ENCODE measurements at regions of chr13 and their contacts with region 1.

Region 1: DNA sequence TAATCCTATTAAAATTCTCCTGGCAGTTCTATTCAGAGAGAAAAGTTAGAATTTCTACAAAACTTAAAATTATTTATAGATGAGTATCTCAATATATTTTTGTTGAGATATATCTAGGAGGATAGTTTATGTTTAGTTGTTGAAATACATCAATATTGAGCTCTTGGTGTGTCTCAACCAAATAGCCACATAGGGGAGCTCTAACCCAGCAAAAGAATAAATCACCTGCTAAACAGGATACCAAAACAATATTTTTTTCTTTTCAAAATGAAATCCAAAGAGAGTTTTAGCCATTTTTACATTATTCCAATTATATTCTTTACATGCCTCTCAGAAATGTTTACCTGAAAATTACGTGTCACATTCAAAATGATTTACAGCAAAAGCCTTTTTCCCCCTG is 954.7 kb downstream of the SLITRK6 start:
- DNase-seq: peak; percentile 4
- ATAC-seq: peak; percentile 49; the same call in 1 of the 2 replicates
- H3K4me3 ChIP-seq: no peak overlapping the region
- H3K27ac ChIP-seq: no peak overlapping the region
- H3K4me1 ChIP-seq: no peaks in the 10 kb centered on the region
- H3K27me3 ChIP-seq: no peaks in the 10 kb centered on the region
- CTCF ChIP-seq: peak; percentile 16 to 46 (median 24); a peak in 5 of 6 replicates
- POLR2A ChIP-seq: no peak
- RAD21 ChIP-seq: peak; percentile 46

Region 2: DNA sequence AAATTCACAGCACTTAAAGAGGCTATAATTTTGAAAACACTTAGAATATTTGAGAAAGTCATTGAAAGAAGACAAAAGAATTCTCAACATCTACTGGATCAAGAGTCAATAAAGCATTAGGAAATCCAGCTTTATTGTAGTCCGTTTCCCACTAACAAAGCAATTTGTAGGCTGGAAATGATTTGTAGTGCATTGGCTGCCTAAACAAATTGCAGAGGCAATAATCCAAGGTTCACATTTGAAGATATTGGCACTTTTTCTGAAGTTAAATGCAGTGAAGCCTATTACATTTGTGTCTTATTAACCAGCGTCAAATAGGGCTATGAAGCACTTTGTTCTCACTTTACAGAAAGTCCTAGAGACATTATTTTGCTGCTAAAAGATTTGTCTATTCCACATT is 114.1 kb before region 1 on chr13:
- CTCF ChIA-PET with region 1: no interaction called
- POLR2A ChIA-PET with region 1: no interaction called
- RAD21 ChIA-PET with region 1: no interaction called
- intact Hi-C with region 1: no loop called
- DNase-seq: no peak
- ATAC-seq: no peak
- H3K4me3 ChIP-seq: no peak overlapping the region
- H3K27ac ChIP-seq: no peak overlapping the region
- H3K4me1 ChIP-seq: no peaks in the 10 kb centered on the region
- H3K27me3 ChIP-seq: no peaks in the 10 kb centered on the region
- CTCF ChIP-seq: no peak
- POLR2A ChIP-seq: no peak
- RAD21 ChIP-seq: no peak

Region 3: DNA sequence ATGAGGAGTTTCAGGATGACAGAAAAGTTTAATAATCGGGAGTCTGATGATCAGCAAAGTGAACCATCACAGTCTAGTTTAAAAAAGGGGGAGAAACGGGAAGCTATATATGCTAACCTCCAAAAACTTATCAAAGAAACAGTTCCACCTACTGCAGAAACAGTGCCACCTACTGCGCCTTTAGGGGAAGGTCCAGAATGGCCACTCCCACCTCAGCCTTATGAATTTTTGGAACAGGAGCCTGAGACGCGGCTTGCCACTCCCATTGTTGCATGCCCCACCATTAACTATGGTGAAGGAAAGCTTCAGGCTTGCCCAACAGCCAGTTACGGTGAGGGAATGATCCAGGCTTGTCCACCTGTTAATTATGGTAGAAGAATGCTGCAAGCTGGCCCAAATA is 25.7 kb after region 1 on chr13:
- CTCF ChIA-PET with region 1: no interaction called
- POLR2A ChIA-PET with region 1: no interaction called
- RAD21 ChIA-PET with region 1: no interaction called
- intact Hi-C with region 1: no loop called
- DNase-seq: no peak
- ATAC-seq: peak; percentile 64
- H3K4me3 ChIP-seq: no peak overlapping the region
- H3K27ac ChIP-seq: no peak overlapping the region
- H3K4me1 ChIP-seq: no peaks in the 10 kb centered on the region
- H3K27me3 ChIP-seq: no peaks in the 10 kb centered on the region
- CTCF ChIP-seq: peak in 2 of 3 experiments; percentile 24 to 31; a peak in 3 of 6 replicates
- POLR2A ChIP-seq: no peak
- RAD21 ChIP-seq: 0 out of 2 replicates have a peak, but pooled peaks have one; percentile 4

Region 4: GRCh38 chr13:85812282-85812681 is 967.8 kb after region 1 on chr13:
- CTCF ChIA-PET with region 1: no interaction called
- POLR2A ChIA-PET with region 1: no interaction called
- RAD21 ChIA-PET with region 1: no interaction called
- intact Hi-C with region 1: loop called (anchors 5 kb)
- DNase-seq: no peak
- ATAC-seq: no peak
- H3K4me3 ChIP-seq: no peak overlapping the region
- H3K27ac ChIP-seq: no peak overlapping the region
- H3K4me1 ChIP-seq: no peaks in the 10 kb centered on the region
- H3K27me3 ChIP-seq: no peaks in the 10 kb centered on the region
- CTCF ChIP-seq: no peak
- POLR2A ChIP-seq: no peak
- RAD21 ChIP-seq: no peak

Measured in HCT116 (cell line).